CD4-positive, alpha-beta memory T cell (primary cell): ENCODE measurements at regions of chr12 and their contacts with region 1.

Region 1: DNA sequence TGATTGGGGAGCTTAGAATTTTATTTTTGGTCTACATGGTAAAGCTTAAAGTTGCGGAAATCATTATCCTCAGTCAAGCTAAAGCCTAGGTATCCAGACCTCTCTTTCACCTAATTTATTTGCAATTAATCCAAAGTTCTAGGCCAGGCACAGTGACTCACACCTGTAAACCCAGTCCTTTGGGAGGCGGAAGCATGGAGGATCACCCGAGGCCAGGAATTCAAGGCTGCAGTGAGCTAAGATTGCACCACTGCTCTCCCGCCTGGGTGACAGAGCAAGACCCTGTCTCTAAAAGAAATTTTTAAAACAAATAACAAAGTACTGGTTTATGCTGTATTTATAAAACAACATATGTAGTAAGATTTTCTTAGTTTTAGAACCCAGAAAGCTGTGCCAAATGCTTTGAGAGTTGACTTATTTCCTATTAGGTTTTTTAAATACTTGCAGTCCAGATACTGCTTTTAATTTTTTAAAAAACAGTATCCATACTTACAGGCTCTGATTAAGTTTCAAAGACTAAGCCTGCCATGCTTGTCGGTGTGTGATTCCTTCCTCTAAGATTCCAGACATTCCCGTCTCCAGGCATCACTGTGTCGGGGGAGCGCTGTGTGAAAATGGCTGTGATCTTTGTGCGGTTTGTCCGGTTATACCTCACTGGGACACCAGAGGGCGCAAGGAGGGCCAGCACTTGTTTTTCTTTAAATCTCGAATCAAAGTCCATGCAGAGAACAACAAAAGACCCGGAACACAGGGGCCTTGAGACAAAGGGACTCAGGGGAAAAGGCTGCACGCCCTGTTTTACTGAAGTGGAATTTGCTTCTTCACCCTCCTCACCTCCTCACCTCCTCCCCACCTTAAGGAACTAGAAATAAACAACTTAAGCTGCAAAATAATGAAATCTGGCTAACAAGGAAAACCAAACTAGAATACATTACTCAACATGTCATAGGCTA is 24.6 kb upstream of the TMPO start:
- DNase-seq: peak; percentile 77 to 82 (median 79)
- H3K4me3 ChIP-seq: no peak overlapping the region
- H3K4me3 Mint-ChIP-seq: peak overlapping the region in 6 of 8 donors; percentile 28 to 78 (median 60)
- H3K27ac ChIP-seq: no peak overlapping the region
- H3K27ac Mint-ChIP-seq: peak overlapping the region; percentile 51 to 95 (median 92)
- H3K4me1 ChIP-seq: peaks cover 8% of the 10 kb centered on the region
- H3K4me1 Mint-ChIP-seq: peaks cover 4 to 7% (median 5%) of the 10 kb centered on the region in 4 donors
- H3K27me3 ChIP-seq: no peaks in the 10 kb centered on the region
- H3K27me3 Mint-ChIP-seq: peaks cover 0 to 1% of the 10 kb centered on the region in 2 donors

Region 2: GRCh38 chr12:98424726-98425401 is 65.9 kb before region 1 on chr12:
- CTCF ChIA-PET with region 1: interaction called, 6 read pairs
- POLR2A ChIA-PET with region 1: interaction called, 4 read pairs
- intact Hi-C with region 1: loop called (anchors 1 kb)
- DNase-seq: peak in 4 of 5 donors; percentile 35 to 46 (median 40)
- H3K4me3 ChIP-seq: no peak overlapping the region
- H3K4me3 Mint-ChIP-seq: no peak overlapping the region
- H3K27ac ChIP-seq: no peak overlapping the region
- H3K27ac Mint-ChIP-seq: no peak overlapping the region
- H3K4me1 ChIP-seq: no peaks in the 10 kb centered on the region
- H3K4me1 Mint-ChIP-seq: peaks cover 0 to 3% (median 0%) of the 10 kb centered on the region in 4 donors
- H3K27me3 ChIP-seq: no peaks in the 10 kb centered on the region
- H3K27me3 Mint-ChIP-seq: peaks cover 3% of the 10 kb centered on the region in 2 donors

Region 3: GRCh38 chr12:98446682-98447081 is 44.1 kb before region 1 on chr12:
- CTCF ChIA-PET with region 1: no interaction called
- POLR2A ChIA-PET with region 1: no interaction called
- intact Hi-C with region 1: no loop called
- DNase-seq: no peak
- H3K4me3 ChIP-seq: no peak overlapping the region
- H3K4me3 Mint-ChIP-seq: no peak overlapping the region
- H3K27ac ChIP-seq: no peak overlapping the region
- H3K27ac Mint-ChIP-seq: no peak overlapping the region
- H3K4me1 ChIP-seq: no peaks in the 10 kb centered on the region
- H3K4me1 Mint-ChIP-seq: no peaks in the 10 kb centered on the region
- H3K27me3 ChIP-seq: no peaks in the 10 kb centered on the region
- H3K27me3 Mint-ChIP-seq: peaks cover 9 to 13% of the 10 kb centered on the region in 2 donors

Region 4: GRCh38 chr12:98503592-98504367 is 13.0 kb after region 1 on chr12:
- CTCF ChIA-PET with region 1: interaction called, 326 read pairs
- POLR2A ChIA-PET with region 1: interaction called, 20 read pairs
- intact Hi-C with region 1: loop called (anchors 1 kb)
- DNase-seq: peak; percentile 90 to 94 (median 93)
- H3K4me3 ChIP-seq: peak overlapping the region; percentile 72 to 93
- H3K4me3 Mint-ChIP-seq: peak overlapping the region; percentile 95 to 99 (median 98)
- H3K27ac ChIP-seq: peak overlapping the region; percentile 85
- H3K27ac Mint-ChIP-seq: peak overlapping the region; percentile 98 to 100 (median 100)
- H3K4me1 ChIP-seq: peaks cover 16% of the 10 kb centered on the region
- H3K4me1 Mint-ChIP-seq: peaks cover 17 to 42% (median 29%) of the 10 kb centered on the region in 4 donors
- H3K27me3 ChIP-seq: no peaks in the 10 kb centered on the region
- H3K27me3 Mint-ChIP-seq: peaks cover 4 to 15% of the 10 kb centered on the region in 2 donors

Region 5: GRCh38 chr12:98532681-98533304 is 42.0 kb after region 1 on chr12:
- CTCF ChIA-PET with region 1: interaction called, 37 read pairs
- POLR2A ChIA-PET with region 1: interaction called, 4 read pairs
- intact Hi-C with region 1: loop called (anchors 1 kb)
- DNase-seq: peak in 4 of 5 donors; percentile 41 to 50 (median 48)
- H3K4me3 ChIP-seq: no peak overlapping the region
- H3K4me3 Mint-ChIP-seq: no peak overlapping the region
- H3K27ac ChIP-seq: no peak overlapping the region
- H3K27ac Mint-ChIP-seq: peak overlapping the region in 6 of 7 donors; percentile 32 to 48 (median 42)
- H3K4me1 ChIP-seq: peaks cover under 1% of the 10 kb centered on the region
- H3K4me1 Mint-ChIP-seq: peaks cover 5 to 28% (median 12%) of the 10 kb centered on the region in 4 donors
- H3K27me3 ChIP-seq: no peaks in the 10 kb centered on the region
- H3K27me3 Mint-ChIP-seq: no peaks in the 10 kb centered on the region

Region 6: GRCh38 chr12:98538031-98538430 is 47.3 kb after region 1 on chr12:
- CTCF ChIA-PET with region 1: interaction called, 37 read pairs
- POLR2A ChIA-PET with region 1: interaction called, 4 read pairs
- intact Hi-C with region 1: no loop called
- DNase-seq: no peak
- H3K4me3 ChIP-seq: no peak overlapping the region
- H3K4me3 Mint-ChIP-seq: no peak overlapping the region
- H3K27ac ChIP-seq: no peak overlapping the region
- H3K27ac Mint-ChIP-seq: peak overlapping the region in 1 of 7 donors; percentile 45
- H3K4me1 ChIP-seq: no peaks in the 10 kb centered on the region
- H3K4me1 Mint-ChIP-seq: peaks cover 5 to 22% (median 9%) of the 10 kb centered on the region in 4 donors
- H3K27me3 ChIP-seq: no peaks in the 10 kb centered on the region
- H3K27me3 Mint-ChIP-seq: no peaks in the 10 kb centered on the region

Region 7: GRCh38 chr12:98653866-98654493 is 163.2 kb after region 1 on chr12:
- CTCF ChIA-PET with region 1: interaction called, 9 read pairs
- POLR2A ChIA-PET with region 1: interaction called, 3 read pairs
- intact Hi-C with region 1: loop called (anchors 1 kb)
- DNase-seq: peak in 4 of 5 donors; percentile 48 to 61 (median 56)
- H3K4me3 ChIP-seq: no peak overlapping the region
- H3K4me3 Mint-ChIP-seq: no peak overlapping the region
- H3K27ac ChIP-seq: no peak overlapping the region
- H3K27ac Mint-ChIP-seq: no peak overlapping the region
- H3K4me1 ChIP-seq: peaks cover 7% of the 10 kb centered on the region
- H3K4me1 Mint-ChIP-seq: peaks cover 12 to 22% (median 15%) of the 10 kb centered on the region in 4 donors
- H3K27me3 ChIP-seq: no peaks in the 10 kb centered on the region
- H3K27me3 Mint-ChIP-seq: no peaks in the 10 kb centered on the region

Region 8: GRCh38 chr12:99334285-99335056 is 843.7 kb after region 1 on chr12:
- CTCF ChIA-PET with region 1: no interaction called
- POLR2A ChIA-PET with region 1: no interaction called
- intact Hi-C with region 1: no loop called
- DNase-seq: no peak
- H3K4me3 ChIP-seq: no peak overlapping the region
- H3K4me3 Mint-ChIP-seq: no peak overlapping the region
- H3K27ac ChIP-seq: no peak overlapping the region
- H3K27ac Mint-ChIP-seq: no peak overlapping the region
- H3K4me1 ChIP-seq: no peaks in the 10 kb centered on the region
- H3K4me1 Mint-ChIP-seq: no peaks in the 10 kb centered on the region
- H3K27me3 ChIP-seq: no peaks in the 10 kb centered on the region
- H3K27me3 Mint-ChIP-seq: no peaks in the 10 kb centered on the region